Naive thymus-derived CD4-positive, alpha-beta T cell (primary cell): ENCODE measurements at regions of chrX and their contacts with region 1.

Region 1: DNA sequence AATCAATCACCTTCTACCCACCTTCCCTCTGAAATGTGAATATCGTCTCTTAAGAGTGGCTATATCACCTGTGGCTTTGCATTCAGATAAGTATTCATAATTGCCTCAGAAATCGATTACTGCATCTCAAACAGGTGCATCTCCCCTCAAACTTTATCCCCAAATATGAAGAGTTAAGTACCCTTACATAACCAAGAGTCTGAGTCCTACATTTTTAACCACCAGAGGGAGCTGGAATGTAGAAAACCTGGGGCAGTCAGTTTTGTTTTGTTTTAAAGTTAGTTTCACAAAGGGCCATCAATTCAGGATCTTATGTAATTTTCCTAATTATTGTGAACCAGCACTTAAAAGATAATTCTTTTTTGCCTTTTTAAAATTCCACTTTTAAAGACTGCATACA is 5.7 kb downstream of the TCEANC start:
- DNase-seq: peak in 7 of 9 donors; percentile 36 to 69 (median 63)
- ATAC-seq: peak; percentile 71
- H3K4me3 ChIP-seq: no peak overlapping the region
- H3K4me3 Mint-ChIP-seq: peak overlapping the region in 1 of 10 donors; percentile 12
- H3K27ac ChIP-seq: peak overlapping the region; percentile 56
- H3K27ac Mint-ChIP-seq: peak overlapping the region in 8 of 9 donors; percentile 43 to 88 (median 78)
- H3K4me1 ChIP-seq: peaks cover 9 to 10% of the 10 kb centered on the region in 2 donors
- H3K4me1 Mint-ChIP-seq: peaks cover 0 to 34% (median 23%) of the 10 kb centered on the region in 7 donors
- H3K27me3 ChIP-seq: no peaks in the 10 kb centered on the region
- H3K27me3 Mint-ChIP-seq: no peaks in the 10 kb centered on the region

Region 2: GRCh38 chrX:13734278-13735172 is 75.9 kb after region 1 on chrX and contains the starts of genes OFD1 and TRAPPC2:
- CTCF ChIA-PET with region 1: interaction called, 6 read pairs
- POLR2A ChIA-PET with region 1: interaction called, 11 read pairs
- intact Hi-C with region 1: loop called (anchors 1 kb)
- DNase-seq: peak; percentile 76 to 92 (median 87)
- ATAC-seq: peak; percentile 94
- H3K4me3 ChIP-seq: peak within 1 kb of the TSS; percentile 85
- H3K4me3 Mint-ChIP-seq: peak within 1 kb of the TSS; percentile 82 to 99 (median 94)
- H3K27ac ChIP-seq: peak within 1 kb of the TSS; percentile 99
- H3K27ac Mint-ChIP-seq: peak within 1 kb of the TSS; percentile 95 to 99 (median 97)
- H3K4me1 ChIP-seq: peaks cover 12 to 20% of the 10 kb centered on the region in 2 donors
- H3K4me1 Mint-ChIP-seq: peaks cover 21 to 66% (median 58%) of the 10 kb centered on the region in 7 donors
- H3K27me3 ChIP-seq: no peaks in the 10 kb centered on the region
- H3K27me3 Mint-ChIP-seq: no peaks in the 10 kb centered on the region
- total RNA-seq, gene OFD1: 30.4 to 142 (median 72.5) TPM
- total RNA-seq, gene TRAPPC2: 20.7 to 31.1 (median 23.5) TPM